ENCODE measurements at regions of chr3 and their contacts with region 1.

Region 1: DNA sequence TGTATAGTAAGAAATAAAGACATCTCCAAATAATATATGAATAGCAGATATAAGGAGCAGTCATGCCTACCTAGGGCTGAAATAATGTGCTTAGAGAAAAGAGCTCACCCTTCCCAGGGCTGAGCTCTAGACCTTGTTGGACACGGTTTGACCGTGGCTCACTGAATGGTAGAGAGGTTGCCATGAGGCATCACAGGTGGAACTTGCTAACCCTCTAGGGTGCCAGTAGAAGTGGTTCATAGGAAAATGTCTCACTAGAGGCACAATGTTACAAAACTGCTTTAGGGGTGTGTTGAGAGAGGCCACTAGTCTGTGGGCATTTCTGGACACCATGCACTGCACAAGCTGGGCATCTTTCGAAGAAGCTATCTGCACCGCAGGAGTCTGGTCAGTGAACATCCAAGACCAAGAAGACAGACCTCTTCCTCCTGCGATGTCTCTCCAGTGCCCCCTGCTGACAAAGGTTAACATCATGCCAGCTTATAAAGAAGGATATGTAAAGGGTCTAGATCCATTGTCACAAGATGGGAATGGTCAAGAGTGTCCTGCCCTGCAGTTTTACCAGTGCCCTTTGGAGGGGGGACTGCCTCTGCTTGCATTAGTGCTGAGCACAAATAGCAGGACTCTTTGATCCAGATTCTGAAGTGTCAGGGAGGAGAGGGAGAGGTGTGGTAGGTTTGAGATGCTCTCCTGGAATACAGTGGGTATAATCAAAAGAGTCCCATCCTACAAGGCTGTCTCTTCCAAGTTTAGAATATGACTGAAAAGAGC is 266.8 kb downstream of the ZNF385D start:
- DNase-seq: peak; percentile 50
- H3K4me3 ChIP-seq: no peak overlapping the region
- H3K27ac ChIP-seq: no peak overlapping the region
- H3K4me1 ChIP-seq: no peaks in the 10 kb centered on the region
- H3K27me3 ChIP-seq: no peaks in the 10 kb centered on the region
- CTCF ChIP-seq: peak; percentile 67 to 88

Region 2: GRCh38 chr3:20225769-20226168 is 1258.5 kb before region 1 on chr3:
- CTCF ChIA-PET with region 1: no interaction called
- dilution Hi-C with region 1: no loop called
- in situ Hi-C with region 1: no loop called
- intact Hi-C with region 1: loop called (anchors 1 kb)
- DNase-seq: peak; percentile 26
- H3K4me3 ChIP-seq: no peak overlapping the region
- H3K27ac ChIP-seq: no peak overlapping the region
- H3K4me1 ChIP-seq: no peaks in the 10 kb centered on the region
- H3K27me3 ChIP-seq: peaks cover 3% of the 10 kb centered on the region
- CTCF ChIP-seq: peak; percentile 49 to 53

Region 3: DNA sequence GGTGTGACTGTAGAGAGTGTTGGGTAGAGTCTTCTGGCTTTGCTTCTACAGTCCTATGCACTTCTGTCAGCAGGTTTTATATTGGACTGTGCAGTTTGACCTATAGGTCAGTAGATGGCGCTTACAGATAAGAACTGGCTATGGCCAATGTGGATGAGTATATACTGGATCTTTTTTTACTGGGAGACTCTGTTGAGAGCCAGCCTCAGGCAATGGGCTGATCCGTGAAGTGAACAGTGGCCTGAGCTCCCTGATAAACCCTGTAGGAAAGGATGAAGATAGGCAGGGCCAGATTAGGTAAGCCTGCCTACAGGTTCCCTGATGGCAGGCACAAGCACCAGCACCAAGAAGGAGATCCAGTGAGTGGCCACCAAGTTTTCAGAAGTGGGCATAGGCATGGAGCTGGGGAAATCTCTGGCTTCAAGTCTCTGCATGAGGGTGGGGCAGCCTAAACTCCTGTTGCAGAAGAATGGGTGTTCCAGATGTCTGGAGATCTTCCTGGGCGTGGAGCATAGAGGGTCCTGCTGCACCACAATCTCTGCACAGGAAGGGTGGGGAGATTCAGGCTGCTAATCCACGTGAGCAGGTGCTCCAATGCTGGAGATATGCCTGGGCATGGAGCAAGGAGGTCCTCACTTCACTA is 972.3 kb before region 1 on chr3:
- CTCF ChIA-PET with region 1: interaction called, 4 read pairs
- dilution Hi-C with region 1: no loop called
- in situ Hi-C with region 1: loop called (anchors 10 to 25 kb)
- intact Hi-C with region 1: loop called (anchors 1 kb)
- DNase-seq: peak; percentile 47
- H3K4me3 ChIP-seq: no peak overlapping the region
- H3K27ac ChIP-seq: no peak overlapping the region
- H3K4me1 ChIP-seq: no peaks in the 10 kb centered on the region
- H3K27me3 ChIP-seq: no peaks in the 10 kb centered on the region
- CTCF ChIP-seq: peak; percentile 55 to 70

Region 4: GRCh38 chr3:21017115-21017852 is 467.0 kb before region 1 on chr3:
- CTCF ChIA-PET with region 1: no interaction called
- dilution Hi-C with region 1: no loop called
- in situ Hi-C with region 1: no loop called
- intact Hi-C with region 1: loop called (anchors 5 kb)
- DNase-seq: peak; percentile 85
- H3K4me3 ChIP-seq: no peak overlapping the region
- H3K27ac ChIP-seq: no peak overlapping the region
- H3K4me1 ChIP-seq: no peaks in the 10 kb centered on the region
- H3K27me3 ChIP-seq: no peaks in the 10 kb centered on the region
- CTCF ChIP-seq: peak; percentile 2 to 40

Region 5: GRCh38 chr3:21752749-21753347 is 268.6 kb after region 1 on chr3:
- CTCF ChIA-PET with region 1: no interaction called
- dilution Hi-C with region 1: no loop called
- in situ Hi-C with region 1: no loop called
- intact Hi-C with region 1: loop called (anchors 10 kb)
- DNase-seq: peak; percentile 63
- H3K4me3 ChIP-seq: no peak overlapping the region
- H3K27ac ChIP-seq: no peak overlapping the region
- H3K4me1 ChIP-seq: peaks cover 8% of the 10 kb centered on the region
- H3K27me3 ChIP-seq: no peaks in the 10 kb centered on the region
- CTCF ChIP-seq: peak; percentile 65 to 75